ENCODE measurements at regions of chr14 and their contacts with region 1.

Region 1: DNA sequence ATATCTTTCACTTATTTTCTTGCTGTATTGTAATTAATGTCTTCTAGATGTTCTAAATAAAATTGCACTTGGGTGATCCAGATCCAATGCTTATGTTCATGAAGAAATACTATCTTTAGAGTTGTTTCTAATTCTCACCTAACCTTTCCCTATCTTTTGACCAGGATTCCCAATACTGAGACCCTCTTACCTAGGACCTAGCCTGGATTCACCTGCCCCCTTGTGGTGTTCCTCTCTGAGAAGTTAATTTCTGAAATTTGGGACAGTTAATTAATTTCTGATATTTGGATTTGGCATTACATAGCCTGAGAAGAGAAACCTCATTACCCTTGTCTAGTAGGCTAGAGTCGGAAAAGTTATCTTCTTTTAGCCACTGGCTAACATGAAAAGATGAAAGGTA is 29.5 kb downstream of the FOXA1 start:
- DNase-seq: peak; percentile 59
- ATAC-seq: peak; percentile 6; the same call in 1 of the 2 replicates
- H3K4me3 ChIP-seq: peak overlapping the region; percentile 60
- H3K27ac ChIP-seq: peak overlapping the region; percentile 91
- H3K4me1 ChIP-seq: peaks cover 59% of the 10 kb centered on the region
- H3K27me3 ChIP-seq: no peaks in the 10 kb centered on the region
- CTCF ChIP-seq: peak; percentile 95

Region 2: GRCh38 chr14:37329189-37330001 is 236.2 kb before region 1 on chr14:
- CTCF ChIA-PET with region 1: interaction called, 3 read pairs
- POLR2A ChIA-PET with region 1: interaction called, 4 read pairs
- intact Hi-C with region 1: loop called (anchors 5 kb)
- DNase-seq: peak; percentile 64
- ATAC-seq: peak; percentile 80
- H3K4me3 ChIP-seq: no peak overlapping the region
- H3K27ac ChIP-seq: peak overlapping the region; percentile 58
- H3K4me1 ChIP-seq: peaks cover 18% of the 10 kb centered on the region
- H3K27me3 ChIP-seq: no peaks in the 10 kb centered on the region
- CTCF ChIP-seq: no peak

Region 3: DNA sequence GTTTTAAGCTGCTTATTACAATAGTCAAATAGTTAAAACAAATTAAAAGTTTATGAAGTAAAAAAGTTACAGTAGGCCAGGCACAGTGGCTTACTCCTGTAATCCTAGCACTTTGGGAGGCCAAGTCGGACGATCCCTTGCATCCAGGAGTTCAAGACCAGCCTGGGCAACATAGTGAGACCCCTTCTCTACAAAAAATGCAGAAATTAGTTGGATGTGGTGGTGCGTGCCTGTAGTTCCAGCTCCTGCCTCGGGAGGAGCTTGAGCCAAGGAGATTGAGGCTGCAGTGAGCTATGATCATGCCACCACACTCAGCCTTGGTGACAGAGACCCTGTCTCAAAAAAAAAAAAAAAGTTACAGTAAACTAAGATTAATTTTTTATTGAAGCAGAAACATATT is 225.2 kb before region 1 on chr14:
- CTCF ChIA-PET with region 1: no interaction called
- POLR2A ChIA-PET with region 1: no interaction called
- intact Hi-C with region 1: loop called (anchors 5 kb)
- DNase-seq: peak; percentile 14
- ATAC-seq: peak; percentile 57; the same call in 1 of the 2 replicates
- H3K4me3 ChIP-seq: no peak overlapping the region
- H3K27ac ChIP-seq: no peak overlapping the region
- H3K4me1 ChIP-seq: no peaks in the 10 kb centered on the region
- H3K27me3 ChIP-seq: no peaks in the 10 kb centered on the region
- CTCF ChIP-seq: peak; percentile 42

Region 4: DNA sequence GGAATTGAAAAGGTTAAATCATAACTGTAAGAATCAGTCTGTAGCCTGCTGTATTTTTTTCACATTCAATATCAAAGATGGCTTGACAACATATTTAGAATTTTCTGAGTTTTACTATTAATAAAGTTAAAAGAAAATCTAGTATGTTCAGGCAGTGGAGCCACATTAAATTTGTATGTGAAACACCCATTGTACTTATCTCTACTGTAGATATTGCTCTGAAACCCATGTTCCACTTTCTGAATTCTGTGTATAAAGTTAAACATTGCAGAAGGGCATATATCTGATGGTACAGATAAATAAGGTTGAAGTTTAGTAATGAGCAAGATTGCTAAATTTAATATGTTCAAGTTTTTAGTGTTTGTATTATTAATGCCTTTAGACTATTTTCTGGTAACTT is 143.2 kb before region 1 on chr14:
- CTCF ChIA-PET with region 1: no interaction called
- POLR2A ChIA-PET with region 1: no interaction called
- intact Hi-C with region 1: loop called (anchors 5 kb)
- DNase-seq: no peak
- ATAC-seq: no peak
- H3K4me3 ChIP-seq: peak overlapping the region; percentile 59
- H3K27ac ChIP-seq: no peak overlapping the region
- H3K4me1 ChIP-seq: peaks cover 8% of the 10 kb centered on the region; the same call in 1 of the 2 replicates
- H3K27me3 ChIP-seq: no peaks in the 10 kb centered on the region
- CTCF ChIP-seq: no peak

Region 5: DNA sequence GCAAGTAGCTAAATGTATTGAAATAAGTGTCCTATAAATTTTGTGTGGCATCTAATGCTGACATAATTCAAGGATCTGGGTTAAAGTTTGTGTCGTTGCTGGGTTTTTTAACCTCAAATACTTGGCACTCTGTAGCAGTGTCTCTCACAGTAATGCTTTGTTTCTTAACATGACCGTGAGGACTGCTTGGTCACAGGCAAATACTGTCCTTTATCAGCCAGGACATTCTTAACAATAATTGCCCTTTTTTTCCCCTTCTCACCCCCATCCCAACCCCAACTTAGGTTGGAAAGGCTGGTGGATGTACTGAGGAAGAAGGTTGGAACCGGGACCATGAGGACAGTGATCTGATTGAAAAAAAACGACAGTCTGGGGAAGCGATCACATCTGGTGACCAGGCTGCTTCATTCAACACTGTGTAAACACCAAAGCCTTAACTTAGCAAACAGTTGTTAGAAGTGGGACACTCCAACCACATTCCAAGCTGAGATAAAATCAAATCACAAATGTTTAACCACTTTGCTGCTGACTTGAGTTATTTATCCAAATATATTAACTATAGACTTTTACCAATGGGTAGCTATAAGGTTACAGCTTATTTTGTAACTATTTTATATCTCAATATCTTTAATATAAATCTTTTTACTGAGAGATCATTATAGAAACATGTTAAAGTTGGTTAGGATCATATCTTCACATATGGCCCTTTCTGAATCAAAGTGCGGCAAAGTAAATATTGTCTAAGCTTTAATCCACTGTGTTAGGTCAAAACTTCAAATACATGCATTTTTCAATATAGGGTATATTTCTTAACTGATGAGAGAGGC is 18.7 kb before region 1 on chr14:
- CTCF ChIA-PET with region 1: no interaction called
- POLR2A ChIA-PET with region 1: no interaction called
- intact Hi-C with region 1: loop called (anchors 1 kb)
- DNase-seq: peak; percentile 89
- ATAC-seq: peak; percentile 87
- H3K4me3 ChIP-seq: peak overlapping the region; percentile 65
- H3K27ac ChIP-seq: peak overlapping the region; percentile 97
- H3K4me1 ChIP-seq: peaks cover 62% of the 10 kb centered on the region
- H3K27me3 ChIP-seq: no peaks in the 10 kb centered on the region
- CTCF ChIP-seq: no peak

Measured in PC-3 (cell line).